ENCODE measurements at regions of chr5 and their contacts with region 1.

Region 1: DNA sequence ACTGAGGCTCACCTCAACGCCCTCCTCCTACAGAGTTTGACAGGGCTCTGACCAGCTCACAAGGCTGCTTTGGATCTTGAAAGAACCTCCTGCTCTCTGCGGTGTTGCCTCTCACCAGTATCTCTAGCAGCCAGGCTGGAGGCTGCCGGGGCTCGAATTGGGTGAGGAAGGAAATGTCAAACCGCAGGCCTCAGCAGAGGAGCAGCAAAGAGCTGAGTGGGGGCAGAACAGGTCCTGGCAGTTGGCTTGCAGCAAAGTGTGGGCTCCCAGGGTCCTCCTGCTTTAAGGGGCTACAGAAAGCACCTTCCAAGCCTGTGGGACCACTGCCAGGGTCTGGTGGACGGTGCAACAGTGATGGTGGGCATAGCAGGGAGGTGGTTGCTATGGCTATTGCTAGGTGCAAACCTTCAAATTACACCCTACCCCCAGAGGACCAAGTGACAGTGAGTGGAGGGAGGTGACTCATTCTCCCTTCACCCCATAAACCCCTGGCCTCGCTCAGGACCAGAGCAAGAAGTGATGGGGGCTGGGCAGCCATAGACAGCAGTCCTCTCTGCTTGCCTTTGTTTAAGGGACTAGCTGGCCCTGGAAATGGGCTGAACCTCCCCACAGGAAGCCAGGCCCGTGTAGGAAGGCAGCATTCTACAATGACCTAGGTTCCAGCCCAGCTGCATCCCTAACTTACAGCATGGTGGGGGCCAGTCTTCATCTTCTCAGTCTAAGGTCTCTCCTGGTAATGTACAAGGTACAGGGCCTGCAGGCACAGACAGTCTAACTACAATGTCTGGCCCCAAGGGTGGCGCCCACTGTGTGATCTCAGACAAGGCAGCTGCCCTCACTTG is 18.7 kb downstream of the LCP2 start:
- DNase-seq: peak; percentile 96
- H3K4me3 Mint-ChIP-seq: peak overlapping the region; percentile 74
- H3K27ac Mint-ChIP-seq: peak overlapping the region; percentile 99
- H3K4me1 Mint-ChIP-seq: peaks cover 89% of the 10 kb centered on the region
- H3K27me3 Mint-ChIP-seq: no peaks in the 10 kb centered on the region

Region 2: DNA sequence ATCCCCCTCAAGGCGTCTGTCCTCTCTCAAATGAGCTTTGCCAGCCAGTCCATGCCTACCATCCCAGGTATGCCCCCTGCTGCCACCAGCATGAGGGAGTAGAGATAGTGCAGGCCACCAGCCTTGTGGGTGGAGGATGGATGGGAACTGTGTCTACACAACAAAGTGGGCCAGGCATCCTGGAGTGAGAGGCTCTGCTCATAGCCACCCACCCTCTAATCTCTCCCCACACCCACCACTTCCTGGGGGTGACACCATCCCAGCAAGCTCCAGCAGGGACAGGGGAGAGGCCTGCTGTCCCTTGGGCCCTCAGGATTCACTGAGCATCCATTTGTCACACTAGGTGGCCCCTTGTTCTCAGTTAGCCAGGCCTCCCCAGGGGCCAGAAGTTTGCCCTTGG is 198.6 kb before region 1 on chr5:
- intact Hi-C with region 1: no loop called
- DNase-seq: no peak
- H3K4me3 Mint-ChIP-seq: no peak overlapping the region
- H3K27ac Mint-ChIP-seq: no peak overlapping the region
- H3K4me1 Mint-ChIP-seq: peaks cover 2% of the 10 kb centered on the region
- H3K27me3 Mint-ChIP-seq: no peaks in the 10 kb centered on the region

Region 3: GRCh38 chr5:170253844-170254455 is 24.9 kb before region 1 on chr5:
- intact Hi-C with region 1: loop called (anchors 1 kb)
- DNase-seq: peak; percentile 88
- H3K4me3 Mint-ChIP-seq: peak overlapping the region; percentile 26
- H3K27ac Mint-ChIP-seq: peak overlapping the region; percentile 76
- H3K4me1 Mint-ChIP-seq: peaks cover 53% of the 10 kb centered on the region
- H3K27me3 Mint-ChIP-seq: no peaks in the 10 kb centered on the region

Region 4: DNA sequence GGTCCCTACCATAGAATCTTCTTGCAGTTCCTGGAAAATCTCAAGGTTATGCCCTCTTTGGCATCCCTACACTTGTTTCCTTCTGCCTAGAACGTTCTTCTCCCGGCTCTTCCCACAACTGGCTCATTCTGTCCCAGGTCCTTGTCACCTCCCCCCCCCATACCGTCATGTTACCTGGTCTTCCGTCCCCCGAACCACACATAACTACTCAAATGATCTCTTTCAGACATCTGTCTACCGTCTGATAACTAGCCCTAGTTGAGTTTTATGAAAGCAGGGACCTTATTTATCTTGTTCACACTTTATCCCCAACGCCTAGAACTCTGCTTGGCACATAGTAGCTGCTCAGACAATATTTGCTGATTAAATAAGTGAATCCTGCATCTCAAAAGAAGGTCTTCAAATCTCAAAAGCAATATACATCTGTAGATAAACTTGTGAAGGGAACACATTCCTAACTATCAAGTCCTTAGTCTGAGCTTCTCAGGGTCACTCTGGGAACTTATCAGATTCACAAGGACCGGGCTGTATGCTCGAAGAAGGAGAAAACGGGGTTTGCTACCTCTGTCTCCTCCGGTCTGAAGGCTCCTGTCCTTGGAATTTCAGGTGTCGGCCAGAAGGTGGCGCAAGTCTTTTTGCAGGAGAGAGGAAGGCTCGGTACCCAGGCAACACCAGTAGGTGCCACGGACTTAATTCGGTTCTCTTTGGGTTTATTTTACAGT is 11.2 kb before region 1 on chr5:
- intact Hi-C with region 1: loop called (anchors 1 kb)
- DNase-seq: peak; percentile 93
- H3K4me3 Mint-ChIP-seq: peak overlapping the region; percentile 73
- H3K27ac Mint-ChIP-seq: peak overlapping the region; percentile 77
- H3K4me1 Mint-ChIP-seq: peaks cover 79% of the 10 kb centered on the region
- H3K27me3 Mint-ChIP-seq: no peaks in the 10 kb centered on the region

Region 5: DNA sequence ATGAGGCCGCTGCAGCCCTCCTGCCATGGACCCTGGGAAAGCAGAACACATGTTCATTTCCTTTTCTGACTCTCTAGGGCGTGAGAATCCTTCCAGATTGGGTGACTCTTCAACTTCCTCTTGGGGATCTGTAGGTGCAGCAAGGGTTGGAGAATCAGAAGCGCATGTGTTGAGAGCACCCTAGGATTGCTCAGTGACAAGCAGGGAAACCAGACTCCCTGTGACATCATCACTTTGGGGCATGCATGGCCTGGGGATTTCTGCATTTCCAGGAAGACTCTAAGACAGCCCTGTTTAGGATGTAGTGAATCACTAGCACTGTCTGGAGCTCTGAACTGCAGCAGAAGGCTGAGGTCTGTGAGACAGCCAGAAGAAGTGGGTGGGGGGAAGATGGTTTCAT is 33.8 kb after region 1 on chr5:
- intact Hi-C with region 1: loop called (anchors 1 kb)
- DNase-seq: peak; percentile 86
- H3K4me3 Mint-ChIP-seq: peak overlapping the region; percentile 76
- H3K27ac Mint-ChIP-seq: peak overlapping the region; percentile 94
- H3K4me1 Mint-ChIP-seq: peaks cover 48% of the 10 kb centered on the region
- H3K27me3 Mint-ChIP-seq: no peaks in the 10 kb centered on the region

Region 6: GRCh38 chr5:170338933-170339779 is 60.3 kb after region 1 on chr5:
- intact Hi-C with region 1: loop called (anchors 1 kb)
- DNase-seq: peak; percentile 88
- H3K4me3 Mint-ChIP-seq: no peak overlapping the region
- H3K27ac Mint-ChIP-seq: peak overlapping the region; percentile 55
- H3K4me1 Mint-ChIP-seq: peaks cover 39% of the 10 kb centered on the region
- H3K27me3 Mint-ChIP-seq: no peaks in the 10 kb centered on the region